Naive thymus-derived CD4-positive, alpha-beta T cell (primary cell): ENCODE measurements at regions of chr6 and their contacts with region 1.

Region 1: DNA sequence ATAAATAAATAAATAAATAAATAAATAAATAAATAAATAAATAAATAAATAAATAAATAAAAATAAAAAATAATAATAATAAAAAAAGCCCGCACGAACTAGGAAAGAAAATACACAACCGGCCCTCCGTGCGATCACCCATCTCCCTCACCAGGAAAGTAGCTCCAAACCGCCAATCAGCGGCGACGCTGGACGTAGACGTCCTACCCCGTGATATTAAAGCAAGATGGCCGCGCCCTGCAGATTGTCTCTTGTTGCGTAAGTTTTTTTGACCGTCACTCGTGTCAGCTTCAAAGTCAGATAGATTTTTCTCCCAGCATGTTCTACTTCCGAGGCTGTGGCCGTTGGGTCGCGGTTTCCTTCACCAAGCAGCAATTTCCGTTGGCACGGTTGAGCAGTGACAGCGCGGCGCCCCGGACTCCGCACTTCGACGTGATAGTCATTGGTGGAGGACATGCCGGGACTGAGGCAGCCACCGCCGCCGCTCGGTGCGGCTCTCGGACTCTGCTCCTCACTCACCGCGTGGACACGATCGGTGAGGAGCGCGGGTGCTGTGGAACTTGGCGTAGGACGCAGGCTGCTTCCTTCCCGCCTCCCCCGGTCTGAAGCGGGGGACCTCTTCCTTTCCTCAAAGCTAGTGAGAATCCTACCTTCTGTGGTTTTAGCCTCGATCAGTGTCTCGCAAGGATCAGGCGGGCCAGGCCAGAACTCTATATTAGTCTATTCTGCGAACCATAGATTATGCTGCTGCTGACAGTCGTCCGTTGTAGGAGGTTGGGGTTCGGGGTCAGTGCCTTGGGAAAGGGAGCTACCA is at the start of gene MTO1:
- DNase-seq: peak; percentile 50 to 86 (median 81)
- ATAC-seq: peak; percentile 97
- H3K4me3 ChIP-seq: peak within 1 kb of the TSS; percentile 92
- H3K4me3 Mint-ChIP-seq: peak within 1 kb of the TSS; percentile 87 to 100 (median 98)
- H3K27ac ChIP-seq: peak within 1 kb of the TSS; percentile 93
- H3K27ac Mint-ChIP-seq: peak within 1 kb of the TSS; percentile 96 to 100 (median 98)
- H3K4me1 ChIP-seq: peaks cover 0 to 8% of the 10 kb centered on the region in 2 donors
- H3K4me1 Mint-ChIP-seq: peaks cover 11 to 53% (median 32%) of the 10 kb centered on the region in 7 donors
- H3K27me3 ChIP-seq: no peaks in the 10 kb centered on the region
- H3K27me3 Mint-ChIP-seq: no peaks in the 10 kb centered on the region
- total RNA-seq, gene MTO1: 43.5 to 92.0 (median 48.6) TPM

Region 2: GRCh38 chr6:72922401-72922800 is 539.3 kb before region 1 on chr6:
- CTCF ChIA-PET with region 1: no interaction called
- POLR2A ChIA-PET with region 1: no interaction called
- intact Hi-C with region 1: no loop called
- DNase-seq: no peak
- ATAC-seq: no peak
- H3K4me3 ChIP-seq: no peak overlapping the region
- H3K4me3 Mint-ChIP-seq: no peak overlapping the region
- H3K27ac ChIP-seq: no peak overlapping the region
- H3K27ac Mint-ChIP-seq: no peak overlapping the region
- H3K4me1 ChIP-seq: no peaks in the 10 kb centered on the region
- H3K4me1 Mint-ChIP-seq: peaks cover 0 to 5% (median 0%) of the 10 kb centered on the region in 7 donors
- H3K27me3 ChIP-seq: no peaks in the 10 kb centered on the region
- H3K27me3 Mint-ChIP-seq: no peaks in the 10 kb centered on the region

Region 3: DNA sequence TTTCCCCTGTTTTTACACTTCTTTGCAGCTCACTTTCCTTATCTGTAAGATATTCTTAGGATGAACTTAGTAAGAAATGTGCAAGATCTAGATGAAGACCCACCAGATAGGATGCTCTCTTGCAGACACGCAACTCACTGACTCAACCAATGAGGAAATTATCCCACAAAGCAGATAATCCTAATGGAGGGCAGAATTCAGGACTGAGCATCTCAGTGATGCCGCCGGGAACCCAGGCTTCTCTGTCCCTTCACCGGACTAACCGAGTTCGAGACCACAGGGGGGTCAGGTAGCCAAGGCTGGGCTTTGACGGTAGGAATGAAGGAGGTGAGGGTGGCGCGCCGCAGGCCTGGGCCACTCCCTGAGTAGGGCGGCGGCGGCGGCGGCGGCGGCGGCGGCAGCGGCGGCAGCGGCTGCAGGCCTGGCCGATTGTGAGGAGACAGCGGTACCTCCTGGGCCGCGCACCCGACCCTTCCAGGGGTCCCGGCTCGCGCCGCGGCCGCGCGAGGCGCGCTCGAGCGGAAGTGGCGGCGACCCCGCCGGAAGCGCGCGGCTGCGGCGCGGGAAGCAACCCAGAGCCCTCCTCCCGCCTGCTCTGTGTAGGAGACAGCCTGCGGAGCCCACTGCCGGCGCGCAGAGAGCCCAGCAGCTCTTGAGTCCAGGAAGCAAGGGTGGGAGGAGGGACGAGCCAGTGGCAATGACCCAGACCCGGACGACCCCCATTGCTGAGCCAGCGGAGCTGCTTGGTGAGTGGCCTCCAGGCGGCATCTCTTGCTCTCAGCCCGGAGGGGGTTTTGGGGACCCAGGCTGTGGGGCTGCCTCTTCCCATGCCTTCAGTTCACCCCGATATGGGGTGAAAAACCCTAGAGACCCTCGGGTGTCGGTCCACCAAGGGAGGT is 198.8 kb before region 1 on chr6 and contains the start of gene KHDC1:
- CTCF ChIA-PET with region 1: no interaction called
- POLR2A ChIA-PET with region 1: no interaction called
- intact Hi-C with region 1: loop called in 1 of 2 experiments (anchors 5 kb)
- DNase-seq: peak; percentile 24 to 67 (median 55)
- ATAC-seq: peak; percentile 87
- H3K4me3 ChIP-seq: peak within 1 kb of the TSS; percentile 88
- H3K4me3 Mint-ChIP-seq: peak within 1 kb of the TSS; percentile 76 to 92 (median 86)
- H3K27ac ChIP-seq: peak within 1 kb of the TSS; percentile 69
- H3K27ac Mint-ChIP-seq: peak within 1 kb of the TSS; percentile 64 to 89 (median 81)
- H3K4me1 ChIP-seq: peaks cover 12 to 15% of the 10 kb centered on the region in 2 donors
- H3K4me1 Mint-ChIP-seq: peaks cover 18 to 40% (median 35%) of the 10 kb centered on the region in 7 donors
- H3K27me3 ChIP-seq: no peaks in the 10 kb centered on the region
- H3K27me3 Mint-ChIP-seq: no peaks in the 10 kb centered on the region
- total RNA-seq, gene KHDC1: 0.46 to 3.7 (median 0.66) TPM

Region 4: DNA sequence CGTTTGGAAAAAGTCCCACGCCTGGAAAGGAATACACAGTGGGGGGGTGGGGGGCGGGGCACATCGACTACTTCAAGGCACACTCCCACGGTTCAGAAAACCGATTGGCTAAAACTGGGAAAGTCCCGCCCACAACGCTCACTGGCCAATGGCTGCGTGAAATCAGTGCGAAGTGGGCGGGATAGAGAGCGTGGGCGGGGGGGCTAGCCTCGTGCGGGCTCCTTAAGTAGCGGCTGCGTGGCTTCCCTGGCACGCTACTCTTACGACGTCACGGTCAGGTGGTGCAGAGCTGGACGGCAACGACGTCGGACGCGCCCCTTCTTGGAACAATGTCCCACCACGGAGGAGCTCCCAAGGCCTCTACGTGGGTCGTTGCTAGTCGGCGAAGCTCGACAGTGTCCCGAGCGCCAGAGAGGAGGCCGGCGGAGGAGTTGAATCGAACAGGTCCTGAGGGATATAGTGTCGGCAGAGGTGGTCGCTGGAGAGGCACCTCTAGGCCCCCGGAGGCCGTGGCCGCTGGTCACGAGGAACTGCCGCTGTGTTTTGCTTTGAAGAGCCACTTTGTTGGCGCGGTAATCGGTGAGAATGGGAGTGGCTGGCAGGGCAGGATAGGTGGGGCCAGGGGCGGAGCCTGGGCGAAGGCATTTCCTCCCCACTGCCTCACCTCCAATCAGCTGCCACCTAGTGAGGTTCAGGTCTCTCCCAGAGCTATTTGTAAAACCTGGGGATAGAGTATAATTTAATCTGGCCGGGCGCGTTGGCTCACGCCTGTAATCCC is 67.0 kb before region 1 on chr6 and contains the start of gene DDX43:
- CTCF ChIA-PET with region 1: no interaction called
- POLR2A ChIA-PET with region 1: no interaction called
- intact Hi-C with region 1: no loop called
- DNase-seq: peak in 8 of 9 donors; percentile 13 to 60 (median 34)
- ATAC-seq: peak; percentile 79
- H3K4me3 ChIP-seq: peak within 1 kb of the TSS; percentile 43
- H3K4me3 Mint-ChIP-seq: peak within 1 kb of the TSS; percentile 32 to 86 (median 78)
- H3K27ac ChIP-seq: peak within 1 kb of the TSS; percentile 68
- H3K27ac Mint-ChIP-seq: peak within 1 kb of the TSS in 7 of 9 donors; percentile 62 to 95 (median 84)
- H3K4me1 ChIP-seq: peaks cover 0 to 7% of the 10 kb centered on the region in 2 donors
- H3K4me1 Mint-ChIP-seq: peaks cover 0 to 23% (median 0%) of the 10 kb centered on the region in 7 donors
- H3K27me3 ChIP-seq: no peaks in the 10 kb centered on the region
- H3K27me3 Mint-ChIP-seq: peaks cover 0 to 6% (median 0%) of the 10 kb centered on the region in 5 donors
- total RNA-seq, gene DDX43: 0.32 to 2.4 (median 0.59) TPM in 4 of 5 experiments, not detected in the other

Region 5: DNA sequence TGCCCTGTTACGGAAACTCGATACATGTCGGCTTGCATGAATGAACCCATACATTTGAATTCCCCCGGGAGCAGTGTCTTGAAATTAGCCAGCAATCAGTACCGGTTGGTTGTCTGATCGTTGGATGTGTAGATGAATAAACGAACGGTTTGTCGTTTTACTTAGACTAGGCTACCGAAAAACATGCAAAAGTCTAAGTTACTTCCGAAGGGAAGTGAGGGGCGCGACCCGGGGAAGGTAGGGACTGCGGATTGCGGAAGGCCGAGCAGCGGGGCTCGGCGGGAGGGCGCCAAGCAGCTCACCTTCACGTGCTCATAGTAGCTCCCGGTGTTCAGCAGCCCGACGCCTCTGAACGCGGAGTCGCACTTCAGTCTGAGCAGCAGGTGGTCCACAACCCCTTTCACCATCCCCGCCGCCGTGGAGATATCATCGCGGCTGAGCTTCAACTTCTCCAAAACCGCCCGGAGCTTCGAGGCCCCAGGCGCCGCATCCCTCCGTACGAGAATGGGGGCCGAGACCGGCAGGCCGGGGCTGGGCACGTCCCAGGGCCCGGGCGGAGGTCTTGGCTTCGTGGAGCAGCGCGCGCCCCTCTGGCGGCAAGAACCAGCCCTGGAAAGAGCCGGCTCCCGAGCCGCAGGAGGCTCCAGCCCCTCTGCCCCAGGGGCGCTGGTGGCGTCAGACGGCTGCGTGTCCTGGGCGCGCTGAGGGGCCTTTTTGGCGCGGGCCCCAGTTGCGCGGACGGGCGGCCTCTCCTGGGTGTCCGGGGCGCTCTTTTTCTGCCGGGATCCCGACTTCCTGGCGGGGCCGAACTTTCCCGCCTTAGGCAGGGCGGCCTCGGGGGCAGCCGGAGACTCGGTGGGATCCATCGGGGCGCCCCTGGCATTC is 10.3 kb before region 1 on chr6:
- CTCF ChIA-PET with region 1: interaction called, 10 read pairs
- POLR2A ChIA-PET with region 1: interaction called, 48 read pairs
- intact Hi-C with region 1: loop called (anchors 1 kb)
- DNase-seq: peak; percentile 22 to 53 (median 38)
- ATAC-seq: peak; percentile 61
- H3K4me3 ChIP-seq: peak overlapping the region; percentile 73
- H3K4me3 Mint-ChIP-seq: peak overlapping the region; percentile 87 to 96 (median 90)
- H3K27ac ChIP-seq: peak overlapping the region; percentile 79
- H3K27ac Mint-ChIP-seq: peak overlapping the region; percentile 65 to 93 (median 79)
- H3K4me1 ChIP-seq: peaks cover 4 to 5% of the 10 kb centered on the region in 2 donors
- H3K4me1 Mint-ChIP-seq: peaks cover 17 to 35% (median 27%) of the 10 kb centered on the region in 7 donors
- H3K27me3 ChIP-seq: no peaks in the 10 kb centered on the region
- H3K27me3 Mint-ChIP-seq: no peaks in the 10 kb centered on the region

Region 6: GRCh38 chr6:73503027-73503772 is 41.5 kb after region 1 on chr6:
- CTCF ChIA-PET with region 1: interaction called, 3 read pairs
- POLR2A ChIA-PET with region 1: interaction called, 3 read pairs
- intact Hi-C with region 1: loop called in 1 of 2 experiments (anchors 5 kb)
- DNase-seq: no peak
- ATAC-seq: peak; percentile 40
- H3K4me3 ChIP-seq: no peak overlapping the region
- H3K4me3 Mint-ChIP-seq: no peak overlapping the region
- H3K27ac ChIP-seq: no peak overlapping the region
- H3K27ac Mint-ChIP-seq: peak overlapping the region in 5 of 9 donors; percentile 1 to 84 (median 41)
- H3K4me1 ChIP-seq: no peaks in the 10 kb centered on the region
- H3K4me1 Mint-ChIP-seq: peaks cover 0 to 4% (median 0%) of the 10 kb centered on the region in 7 donors
- H3K27me3 ChIP-seq: no peaks in the 10 kb centered on the region
- H3K27me3 Mint-ChIP-seq: no peaks in the 10 kb centered on the region

Region 7: DNA sequence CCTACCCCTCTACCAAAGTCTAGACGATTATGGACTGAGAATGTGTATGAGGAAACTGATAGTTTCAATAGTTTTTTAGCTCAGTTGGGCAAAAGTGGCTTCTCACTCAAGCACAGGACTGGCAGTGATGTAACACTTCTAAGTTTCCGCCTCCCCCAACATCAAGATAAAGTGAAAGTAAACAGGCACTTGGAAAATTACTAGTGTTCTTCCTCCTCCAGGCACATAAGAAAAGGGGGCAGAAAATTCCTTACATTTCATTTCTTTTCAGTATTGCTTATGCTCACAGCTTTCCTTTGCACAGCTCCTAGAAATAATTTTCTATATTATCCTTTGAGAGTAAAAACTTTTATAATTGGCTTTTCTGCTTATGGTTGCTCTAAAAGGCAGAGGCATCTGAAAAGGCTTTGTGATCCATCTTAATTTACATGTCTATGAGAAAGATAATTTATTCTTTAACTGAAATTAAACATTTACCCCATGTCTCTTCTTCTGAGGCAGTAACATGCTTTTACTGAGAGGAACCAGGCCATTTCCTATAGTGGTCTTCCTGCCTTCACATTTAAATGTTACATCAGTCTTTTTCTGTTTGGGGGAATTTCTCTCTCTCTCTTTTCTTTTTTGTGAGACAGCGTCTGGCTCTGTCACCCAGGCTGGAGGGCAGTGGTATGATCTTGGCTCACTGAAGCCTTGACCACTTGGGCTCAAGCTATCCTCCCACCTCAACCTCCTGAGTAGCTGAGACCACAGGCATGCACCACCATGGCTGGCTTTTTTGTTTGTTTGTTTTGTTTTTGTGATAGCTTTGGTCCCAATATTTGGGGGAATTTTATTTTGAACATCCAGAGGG is 124.0 kb after region 1 on chr6:
- CTCF ChIA-PET with region 1: no interaction called
- POLR2A ChIA-PET with region 1: interaction called, 16 read pairs
- intact Hi-C with region 1: loop called in 1 of 2 experiments (anchors 5 kb)
- DNase-seq: peak in 7 of 9 donors; percentile 55 to 76 (median 67)
- ATAC-seq: peak; percentile 82
- H3K4me3 ChIP-seq: peak overlapping the region; percentile 51
- H3K4me3 Mint-ChIP-seq: peak overlapping the region; percentile 78 to 90 (median 86)
- H3K27ac ChIP-seq: peak overlapping the region; percentile 89
- H3K27ac Mint-ChIP-seq: peak overlapping the region; percentile 91 to 100 (median 99)
- H3K4me1 ChIP-seq: peaks cover 6 to 16% of the 10 kb centered on the region in 2 donors
- H3K4me1 Mint-ChIP-seq: peaks cover 22 to 27% (median 24%) of the 10 kb centered on the region in 7 donors
- H3K27me3 ChIP-seq: no peaks in the 10 kb centered on the region
- H3K27me3 Mint-ChIP-seq: no peaks in the 10 kb centered on the region

Region 8: DNA sequence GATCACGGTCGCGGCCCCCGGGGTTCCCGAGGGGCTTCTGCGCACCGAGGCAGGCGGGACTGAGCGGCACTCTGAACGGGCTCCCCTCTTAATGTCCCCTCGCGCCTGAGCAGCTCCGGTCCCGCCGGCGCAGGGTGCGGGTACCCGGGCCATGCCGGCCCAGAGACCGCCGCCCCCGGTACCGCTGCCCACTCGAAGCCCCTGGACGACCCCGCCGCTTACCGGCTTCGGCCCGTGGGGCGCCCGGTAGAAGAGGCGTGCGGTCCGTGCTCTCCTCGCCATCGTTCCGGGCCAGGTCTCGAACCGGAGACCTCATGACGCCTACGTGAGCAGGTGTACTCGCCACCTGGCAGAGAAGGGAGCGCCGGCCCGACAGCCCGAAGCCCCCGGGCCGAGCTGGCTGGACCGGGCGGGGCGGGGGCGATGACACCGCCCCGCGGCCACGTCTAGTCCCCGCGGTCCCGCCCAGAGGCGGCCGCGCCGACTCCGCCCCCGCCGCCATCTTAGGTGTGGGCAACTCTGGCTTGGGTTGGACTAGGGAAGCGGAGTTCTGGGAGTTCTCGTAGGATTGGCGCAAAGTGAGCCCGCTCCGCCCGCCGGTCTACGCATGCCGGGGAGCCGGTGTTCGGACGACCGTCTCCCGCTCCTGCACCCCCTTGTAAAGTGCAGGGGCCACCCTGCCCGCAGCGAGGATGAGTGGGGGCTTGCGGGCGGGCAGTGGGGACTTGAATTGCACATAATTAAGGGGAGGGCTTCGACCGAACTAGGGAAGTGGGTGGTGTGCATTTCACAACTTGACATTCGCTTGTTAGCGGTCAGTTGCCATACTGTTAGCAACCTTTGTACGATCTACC is 192.1 kb after region 1 on chr6 and contains the start of gene SLC17A5:
- CTCF ChIA-PET with region 1: interaction called, 6 read pairs
- POLR2A ChIA-PET with region 1: interaction called, 8 read pairs
- intact Hi-C with region 1: loop called (anchors 1 kb)
- DNase-seq: peak; percentile 76 to 89 (median 82)
- ATAC-seq: peak; percentile 95
- H3K4me3 ChIP-seq: peak within 1 kb of the TSS; percentile 99
- H3K4me3 Mint-ChIP-seq: peak within 1 kb of the TSS; percentile 95 to 100 (median 98)
- H3K27ac ChIP-seq: peak within 1 kb of the TSS; percentile 99
- H3K27ac Mint-ChIP-seq: peak within 1 kb of the TSS; percentile 90 to 99 (median 97)
- H3K4me1 ChIP-seq: peaks cover 10 to 13% of the 10 kb centered on the region in 2 donors
- H3K4me1 Mint-ChIP-seq: peaks cover 17 to 42% (median 37%) of the 10 kb centered on the region in 7 donors
- H3K27me3 ChIP-seq: no peaks in the 10 kb centered on the region
- H3K27me3 Mint-ChIP-seq: no peaks in the 10 kb centered on the region
- total RNA-seq, gene SLC17A5: 6.0 to 13.8 (median 8.9) TPM

Region 9: DNA sequence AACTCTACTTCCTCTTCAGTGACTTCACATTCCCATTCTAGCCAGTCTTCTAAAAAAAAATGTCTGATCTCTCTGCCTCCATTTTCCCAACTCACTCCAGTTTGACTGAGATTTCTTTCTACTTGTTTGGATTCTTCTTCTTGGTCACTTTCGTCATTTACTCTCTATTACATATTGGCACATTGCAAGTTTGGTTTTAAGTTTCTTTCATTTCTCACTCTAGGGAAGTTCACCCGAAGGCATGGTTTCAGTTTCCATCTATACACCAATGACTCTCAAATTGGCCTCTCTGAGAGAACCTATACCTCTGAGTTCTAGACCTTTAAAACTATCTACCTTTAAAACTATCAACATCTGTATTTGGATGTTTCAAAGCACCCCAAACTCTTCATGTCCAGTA is 285.5 kb after region 1 on chr6:
- CTCF ChIA-PET with region 1: no interaction called
- POLR2A ChIA-PET with region 1: no interaction called
- intact Hi-C with region 1: no loop called
- DNase-seq: no peak
- ATAC-seq: peak; percentile 69
- H3K4me3 ChIP-seq: peak overlapping the region; percentile 17
- H3K4me3 Mint-ChIP-seq: no peak overlapping the region
- H3K27ac ChIP-seq: no peak overlapping the region
- H3K27ac Mint-ChIP-seq: no peak overlapping the region
- H3K4me1 ChIP-seq: no peaks in the 10 kb centered on the region
- H3K4me1 Mint-ChIP-seq: peaks cover 0 to 2% (median 0%) of the 10 kb centered on the region in 7 donors
- H3K27me3 ChIP-seq: no peaks in the 10 kb centered on the region
- H3K27me3 Mint-ChIP-seq: no peaks in the 10 kb centered on the region